CD4-positive, alpha-beta memory T cell (primary cell): ENCODE measurements at regions of chr19 and their contacts with region 1.

Region 1: GRCh38 chr19:3108775-3109174 is 14.6 kb downstream of the GNA11 start:
- DNase-seq: peak; percentile 60 to 74 (median 66)
- H3K4me3 ChIP-seq: no peak overlapping the region
- H3K4me3 Mint-ChIP-seq: peak overlapping the region in 2 of 8 donors; percentile 1 to 54
- H3K27ac ChIP-seq: no peak overlapping the region
- H3K27ac Mint-ChIP-seq: peak overlapping the region in 1 of 7 donors; percentile 72
- H3K4me1 ChIP-seq: peaks cover 12% of the 10 kb centered on the region
- H3K4me1 Mint-ChIP-seq: peaks cover 5 to 11% (median 10%) of the 10 kb centered on the region in 4 donors
- H3K27me3 ChIP-seq: no peaks in the 10 kb centered on the region
- H3K27me3 Mint-ChIP-seq: peaks cover 0 to 2% of the 10 kb centered on the region in 2 donors

Region 2: GRCh38 chr19:2648528-2648937 is 460.2 kb before region 1 on chr19:
- CTCF ChIA-PET with region 1: interaction called, 8 read pairs
- POLR2A ChIA-PET with region 1: no interaction called
- intact Hi-C with region 1: loop called (anchors 10 kb)
- DNase-seq: peak; percentile 63 to 76 (median 68)
- H3K4me3 ChIP-seq: no peak overlapping the region
- H3K4me3 Mint-ChIP-seq: no peak overlapping the region
- H3K27ac ChIP-seq: no peak overlapping the region
- H3K27ac Mint-ChIP-seq: no peak overlapping the region
- H3K4me1 ChIP-seq: no peaks in the 10 kb centered on the region
- H3K4me1 Mint-ChIP-seq: peaks cover 0 to 1% (median 0%) of the 10 kb centered on the region in 4 donors
- H3K27me3 ChIP-seq: no peaks in the 10 kb centered on the region
- H3K27me3 Mint-ChIP-seq: no peaks in the 10 kb centered on the region

Region 3: DNA sequence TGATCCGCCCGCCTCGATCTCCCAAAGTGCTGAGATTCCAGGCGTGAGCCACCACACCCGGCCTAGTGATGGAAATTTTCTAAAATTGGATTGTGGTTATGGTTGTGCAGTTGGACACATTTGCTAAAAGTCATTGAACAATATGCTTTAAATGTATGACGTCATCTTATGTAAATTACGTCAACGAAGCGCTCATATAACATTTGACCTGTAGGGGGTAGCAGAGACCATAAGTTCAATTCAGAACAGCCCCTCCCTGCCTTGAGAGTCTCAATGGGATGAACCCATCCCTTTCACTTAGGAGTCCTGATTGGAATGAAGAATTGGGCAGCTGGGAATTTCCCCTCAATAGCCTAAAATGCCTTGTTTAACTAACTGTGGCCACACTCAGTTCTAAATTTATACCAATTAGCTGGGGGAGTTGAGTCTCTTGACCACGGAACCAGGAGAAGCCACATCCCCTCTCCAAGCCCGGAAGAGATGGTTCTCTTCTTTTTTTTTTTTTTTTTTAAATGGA is 146.7 kb before region 1 on chr19:
- CTCF ChIA-PET with region 1: interaction called, 375 read pairs
- POLR2A ChIA-PET with region 1: interaction called, 3 read pairs
- intact Hi-C with region 1: loop called (anchors 1 kb)
- DNase-seq: peak; percentile 72 to 80 (median 77)
- H3K4me3 ChIP-seq: no peak overlapping the region
- H3K4me3 Mint-ChIP-seq: peak overlapping the region in 2 of 8 donors; percentile 16 to 17
- H3K27ac ChIP-seq: no peak overlapping the region
- H3K27ac Mint-ChIP-seq: peak overlapping the region; percentile 48 to 92 (median 85)
- H3K4me1 ChIP-seq: no peaks in the 10 kb centered on the region
- H3K4me1 Mint-ChIP-seq: peaks cover 4 to 6% (median 5%) of the 10 kb centered on the region in 4 donors
- H3K27me3 ChIP-seq: no peaks in the 10 kb centered on the region
- H3K27me3 Mint-ChIP-seq: no peaks in the 10 kb centered on the region

Region 4: DNA sequence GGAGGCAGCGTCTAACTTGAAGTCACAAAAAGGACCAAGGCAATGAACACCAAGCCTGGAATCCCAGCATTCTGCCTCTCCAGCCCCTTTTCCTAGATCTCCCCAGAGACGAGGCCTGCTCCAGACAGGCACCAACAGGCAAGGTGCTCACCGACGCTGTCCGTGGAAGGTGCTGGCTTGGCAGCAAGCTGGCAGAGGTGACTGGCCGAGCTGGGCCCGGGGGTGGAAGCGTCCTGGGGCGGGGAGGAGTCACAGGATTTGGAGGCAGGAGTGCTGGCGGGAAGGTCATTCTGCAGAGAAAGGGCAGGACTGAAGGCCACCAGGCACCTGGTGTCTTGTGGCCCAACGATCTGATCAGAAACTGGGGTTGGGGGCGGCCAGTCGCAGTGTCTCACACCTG is 97.9 kb before region 1 on chr19:
- CTCF ChIA-PET with region 1: no interaction called
- POLR2A ChIA-PET with region 1: no interaction called
- intact Hi-C with region 1: no loop called
- DNase-seq: no peak
- H3K4me3 ChIP-seq: no peak overlapping the region
- H3K4me3 Mint-ChIP-seq: no peak overlapping the region
- H3K27ac ChIP-seq: no peak overlapping the region
- H3K27ac Mint-ChIP-seq: no peak overlapping the region
- H3K4me1 ChIP-seq: no peaks in the 10 kb centered on the region
- H3K4me1 Mint-ChIP-seq: no peaks in the 10 kb centered on the region
- H3K27me3 ChIP-seq: no peaks in the 10 kb centered on the region
- H3K27me3 Mint-ChIP-seq: no peaks in the 10 kb centered on the region

Region 5: GRCh38 chr19:3075895-3076431 is 32.8 kb before region 1 on chr19:
- CTCF ChIA-PET with region 1: interaction called, 111 read pairs
- POLR2A ChIA-PET with region 1: no interaction called
- intact Hi-C with region 1: loop called (anchors 1 kb)
- DNase-seq: peak; percentile 65 to 76 (median 66)
- H3K4me3 ChIP-seq: no peak overlapping the region
- H3K4me3 Mint-ChIP-seq: peak overlapping the region in 2 of 8 donors; percentile 41 to 58
- H3K27ac ChIP-seq: no peak overlapping the region
- H3K27ac Mint-ChIP-seq: peak overlapping the region in 2 of 7 donors; percentile 43 to 68
- H3K4me1 ChIP-seq: peaks cover 7% of the 10 kb centered on the region
- H3K4me1 Mint-ChIP-seq: peaks cover 0 to 10% (median 3%) of the 10 kb centered on the region in 4 donors
- H3K27me3 ChIP-seq: no peaks in the 10 kb centered on the region
- H3K27me3 Mint-ChIP-seq: no peaks in the 10 kb centered on the region

Region 6: DNA sequence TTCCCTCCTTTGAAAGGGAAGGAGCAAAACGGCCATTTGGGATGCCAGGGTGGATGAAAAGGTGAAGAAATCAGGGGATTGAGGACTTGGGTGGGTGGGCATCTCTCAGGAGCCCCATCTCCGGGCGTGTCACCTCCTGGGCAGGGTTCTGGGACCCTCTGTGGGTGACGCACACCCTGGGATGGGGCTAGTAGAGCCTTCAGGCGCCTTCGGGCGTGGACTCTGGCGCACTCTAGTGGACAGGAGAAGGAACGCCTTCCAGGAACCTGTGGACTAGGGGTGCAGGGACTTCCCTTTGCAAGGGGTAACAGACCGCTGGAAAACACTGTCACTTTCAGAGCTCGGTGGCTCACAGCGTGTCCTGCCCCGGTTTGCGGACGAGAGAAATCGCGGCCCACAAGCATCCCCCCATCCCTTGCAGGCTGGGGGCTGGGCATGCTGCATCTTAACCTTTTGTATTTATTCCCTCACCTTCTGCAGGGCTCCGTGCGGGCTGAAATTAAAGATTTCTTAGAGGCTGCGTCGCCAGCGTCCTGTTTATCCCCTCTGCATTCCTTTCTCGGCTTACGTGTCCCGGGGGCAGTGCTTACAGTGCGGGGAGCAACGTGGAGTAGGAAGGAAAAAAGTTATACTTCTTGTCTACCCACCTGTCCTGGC is 54.6 kb after region 1 on chr19:
- CTCF ChIA-PET with region 1: interaction called, 11 read pairs
- POLR2A ChIA-PET with region 1: no interaction called
- intact Hi-C with region 1: no loop called
- DNase-seq: peak; percentile 69 to 73 (median 71)
- H3K4me3 ChIP-seq: no peak overlapping the region
- H3K4me3 Mint-ChIP-seq: peak overlapping the region in 3 of 8 donors; percentile 5 to 55 (median 55)
- H3K27ac ChIP-seq: no peak overlapping the region
- H3K27ac Mint-ChIP-seq: peak overlapping the region; percentile 62 to 92 (median 77)
- H3K4me1 ChIP-seq: peaks cover 11% of the 10 kb centered on the region
- H3K4me1 Mint-ChIP-seq: peaks cover 9 to 30% (median 15%) of the 10 kb centered on the region in 4 donors
- H3K27me3 ChIP-seq: no peaks in the 10 kb centered on the region
- H3K27me3 Mint-ChIP-seq: no peaks in the 10 kb centered on the region